Breast epithelium (tissue), 4 donors: ENCODE measurements at regions of chr5 and their contacts with region 1.

Region 1: DNA sequence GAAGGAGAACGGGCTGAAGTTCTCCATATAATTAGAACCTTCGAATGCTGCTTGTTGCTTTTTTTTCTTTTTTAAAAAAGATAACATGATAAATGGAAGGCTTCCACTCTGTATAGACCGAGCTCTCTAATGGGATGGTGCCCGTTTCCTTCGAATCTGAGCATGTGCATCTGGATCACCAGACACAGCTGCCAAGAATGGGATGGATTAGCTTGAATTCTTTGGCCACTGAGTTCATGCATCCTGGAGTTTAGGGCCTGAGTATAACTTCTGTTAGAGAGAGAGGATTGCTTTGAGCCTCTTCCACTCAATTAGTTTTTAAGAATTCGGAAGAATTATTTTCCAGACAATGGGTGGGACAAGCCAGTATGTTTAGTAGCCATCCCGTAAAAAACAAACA is 93.7 kb upstream of the GDNF start:
- DNase-seq: no peak
- H3K4me3 ChIP-seq: no peak overlapping the region
- H3K27ac ChIP-seq: no peak overlapping the region
- H3K4me1 ChIP-seq: no peaks in the 10 kb centered on the region
- H3K27me3 ChIP-seq: no peaks in the 10 kb centered on the region
- CTCF ChIP-seq: no peak
- POLR2A ChIP-seq: no peak

Region 2: DNA sequence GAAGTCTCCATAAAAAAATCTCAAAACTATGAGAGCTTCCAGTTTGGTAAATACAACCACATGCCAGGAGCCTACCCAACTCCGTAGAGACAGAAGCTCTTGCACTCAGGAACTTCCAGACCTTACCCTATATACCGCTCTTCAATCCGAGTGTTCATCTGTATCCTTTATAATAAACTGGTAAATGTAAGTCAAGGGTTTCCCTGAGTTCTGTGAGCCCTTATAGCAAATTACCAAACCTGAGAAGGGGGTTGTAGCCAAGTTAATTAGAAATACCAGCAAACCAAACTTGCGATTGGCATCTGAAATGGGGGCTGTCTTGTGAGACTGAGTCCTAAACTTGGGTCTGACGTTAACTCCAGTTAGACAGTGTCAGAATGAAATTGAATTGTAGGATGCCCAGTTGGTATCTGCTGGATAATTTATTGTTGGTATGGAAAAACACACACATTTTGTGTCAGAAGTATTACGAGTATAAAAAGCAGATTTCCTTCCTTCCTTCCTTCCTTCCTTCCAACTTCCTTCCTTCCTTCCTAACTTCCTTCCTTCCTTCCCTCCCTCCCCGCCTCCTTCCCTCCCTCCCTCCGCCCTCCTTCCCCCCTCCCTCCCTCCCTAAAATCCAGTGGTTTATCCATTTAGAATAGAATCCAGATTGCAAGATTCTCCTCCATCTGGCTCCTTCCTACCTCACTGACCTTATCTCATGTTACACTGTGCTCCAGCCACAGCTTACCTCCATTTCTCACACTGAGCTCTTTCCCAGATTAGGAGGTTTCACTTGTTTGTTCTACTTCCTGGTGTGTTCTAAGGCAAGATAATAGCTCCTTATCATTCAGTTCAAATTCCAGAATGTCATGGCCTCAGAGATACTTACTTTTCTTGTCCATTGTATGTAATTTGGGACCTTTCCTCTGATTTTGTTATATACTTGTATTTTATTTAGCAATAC is 357.8 kb before region 1 on chr5:
- intact Hi-C with region 1: loop called (anchors 5 kb)
- DNase-seq: no peak
- H3K4me3 ChIP-seq: no peak overlapping the region
- H3K27ac ChIP-seq: no peak overlapping the region
- H3K4me1 ChIP-seq: no peaks in the 10 kb centered on the region
- H3K27me3 ChIP-seq: no peaks in the 10 kb centered on the region
- CTCF ChIP-seq: no peak
- POLR2A ChIP-seq: no peak